SK-N-SH (cell line): ENCODE measurements at regions of chr22 and their contacts with region 1.

Region 1: DNA sequence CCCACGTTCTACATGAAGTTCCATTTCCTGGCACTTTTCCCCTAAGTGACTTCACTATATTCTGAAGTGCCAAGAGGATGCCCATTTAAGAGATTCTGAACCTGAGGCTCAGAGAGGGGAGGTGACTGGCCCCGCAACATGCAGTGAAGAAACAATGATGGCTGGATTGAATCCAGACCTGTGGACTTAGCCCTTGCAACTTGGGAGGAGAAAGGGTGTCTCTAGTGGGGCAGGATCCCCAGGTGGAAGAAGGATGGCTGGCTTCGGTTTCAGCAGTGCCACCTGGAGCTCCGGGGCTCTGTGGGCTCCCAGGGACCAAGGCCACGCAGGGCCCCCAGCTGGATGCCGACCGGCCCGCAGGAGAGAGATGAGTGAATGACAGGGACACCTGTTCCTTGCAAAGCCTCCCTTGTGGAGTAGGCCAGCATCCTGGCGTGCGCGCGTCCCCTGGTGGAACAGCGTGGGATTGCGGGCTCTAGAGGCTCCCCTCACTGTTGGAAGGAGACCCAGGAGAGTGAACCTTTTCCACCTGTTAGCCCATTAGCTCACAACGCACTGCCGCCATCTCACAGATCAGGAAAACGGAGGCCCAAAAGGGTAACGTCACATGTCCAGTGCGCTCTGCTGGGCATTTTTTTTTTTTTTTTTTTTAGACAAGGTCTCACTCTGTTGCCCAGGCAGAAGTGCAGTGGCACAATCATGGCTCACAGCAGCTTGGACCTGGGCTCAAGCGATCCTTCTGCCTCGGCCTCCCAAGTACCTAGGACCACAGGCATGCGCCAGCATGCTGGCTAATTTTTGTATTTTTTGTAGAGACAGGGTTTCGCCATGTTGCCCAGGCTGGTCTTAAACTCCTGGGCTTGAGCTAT is 104.7 kb downstream of the KIAA1671 start:
- DNase-seq: peak; percentile 79
- H3K4me3 ChIP-seq: peak overlapping the region in 1 of 2 experiments; percentile 36; a peak in 1 of 4 replicates
- H3K27ac ChIP-seq: no peak overlapping the region
- H3K4me1 ChIP-seq: peaks cover 0 to 15% of the 10 kb centered on the region in 2 experiments; a peak in 1 of 4 replicates
- H3K27me3 ChIP-seq: no peaks in the 10 kb centered on the region
- CTCF ChIP-seq: peak; percentile 73
- EP300 ChIP-seq: no peak
- RAD21 ChIP-seq: peak; percentile 76

Region 2: GRCh38 chr22:24926849-24927579 is 130.2 kb before region 1 on chr22:
- CTCF ChIA-PET with region 1: interaction called, 17 read pairs
- POLR2A ChIA-PET with region 1: no interaction called
- DNase-seq: no peak
- H3K4me3 ChIP-seq: no peak overlapping the region
- H3K27ac ChIP-seq: no peak overlapping the region
- H3K4me1 ChIP-seq: no peaks in the 10 kb centered on the region
- H3K27me3 ChIP-seq: no peaks in the 10 kb centered on the region
- CTCF ChIP-seq: no peak
- EP300 ChIP-seq: no peak
- RAD21 ChIP-seq: no peak

Region 3: GRCh38 chr22:25013607-25014006 is 43.6 kb before region 1 on chr22:
- CTCF ChIA-PET with region 1: interaction called, 13 read pairs
- POLR2A ChIA-PET with region 1: no interaction called
- DNase-seq: no peak
- H3K4me3 ChIP-seq: no peak overlapping the region
- H3K27ac ChIP-seq: no peak overlapping the region
- H3K4me1 ChIP-seq: peaks cover 5 to 9% of the 10 kb centered on the region in 2 experiments; a peak in 2 of 4 replicates
- H3K27me3 ChIP-seq: no peaks in the 10 kb centered on the region
- CTCF ChIP-seq: no peak
- EP300 ChIP-seq: no peak
- RAD21 ChIP-seq: no peak

Region 4: DNA sequence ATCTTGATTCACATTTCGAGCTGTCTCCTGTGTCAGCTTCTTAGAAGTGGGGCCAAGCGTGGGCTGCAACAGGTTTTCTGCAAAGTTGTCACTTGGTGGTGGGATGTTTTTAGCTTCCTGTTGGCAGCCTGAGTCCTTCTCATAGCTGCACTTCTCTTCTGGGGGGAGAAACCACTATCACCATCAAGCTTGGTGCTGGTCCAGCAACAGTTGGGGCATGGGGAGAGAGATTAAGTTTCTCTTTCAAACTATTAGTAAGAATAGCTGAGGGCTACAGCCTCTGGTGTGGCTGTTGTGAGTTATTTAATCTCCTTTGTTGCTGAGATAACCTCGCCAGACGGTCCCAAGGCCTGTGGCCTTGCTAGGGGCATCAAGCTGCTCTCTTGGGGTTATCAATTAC is 19.1 kb after region 1 on chr22:
- CTCF ChIA-PET with region 1: interaction called, 14 read pairs
- POLR2A ChIA-PET with region 1: no interaction called
- DNase-seq: no peak
- H3K4me3 ChIP-seq: no peak overlapping the region
- H3K27ac ChIP-seq: no peak overlapping the region
- H3K4me1 ChIP-seq: peaks cover 0 to 9% of the 10 kb centered on the region in 2 experiments; a peak in 1 of 4 replicates
- H3K27me3 ChIP-seq: no peaks in the 10 kb centered on the region
- CTCF ChIP-seq: no peak
- EP300 ChIP-seq: no peak
- RAD21 ChIP-seq: no peak

Region 5: GRCh38 chr22:25110846-25111578 is 53.8 kb after region 1 on chr22:
- CTCF ChIA-PET with region 1: interaction called, 10 read pairs
- POLR2A ChIA-PET with region 1: no interaction called
- DNase-seq: peak; percentile 86
- H3K4me3 ChIP-seq: peak overlapping the region; percentile 52 to 65
- H3K27ac ChIP-seq: peak overlapping the region; percentile 30 to 74
- H3K4me1 ChIP-seq: peaks cover 0 to 14% of the 10 kb centered on the region in 2 experiments; a peak in 1 of 4 replicates
- H3K27me3 ChIP-seq: no peaks in the 10 kb centered on the region
- CTCF ChIP-seq: peak; percentile 67
- EP300 ChIP-seq: no peak
- RAD21 ChIP-seq: peak; percentile 66